ENCODE measurements at regions of chr15 and their contacts with region 1.

Region 1: GRCh38 chr15:49242820-49243219 is 72.8 kb downstream of the GALK2 start:
- DNase-seq: peak; percentile 87
- H3K4me3 ChIP-seq: peak overlapping the region; percentile 39
- H3K27ac ChIP-seq: peak overlapping the region; percentile 78
- H3K4me1 ChIP-seq: peaks cover 51% of the 10 kb centered on the region
- H3K27me3 ChIP-seq: no peaks in the 10 kb centered on the region

Region 2: DNA sequence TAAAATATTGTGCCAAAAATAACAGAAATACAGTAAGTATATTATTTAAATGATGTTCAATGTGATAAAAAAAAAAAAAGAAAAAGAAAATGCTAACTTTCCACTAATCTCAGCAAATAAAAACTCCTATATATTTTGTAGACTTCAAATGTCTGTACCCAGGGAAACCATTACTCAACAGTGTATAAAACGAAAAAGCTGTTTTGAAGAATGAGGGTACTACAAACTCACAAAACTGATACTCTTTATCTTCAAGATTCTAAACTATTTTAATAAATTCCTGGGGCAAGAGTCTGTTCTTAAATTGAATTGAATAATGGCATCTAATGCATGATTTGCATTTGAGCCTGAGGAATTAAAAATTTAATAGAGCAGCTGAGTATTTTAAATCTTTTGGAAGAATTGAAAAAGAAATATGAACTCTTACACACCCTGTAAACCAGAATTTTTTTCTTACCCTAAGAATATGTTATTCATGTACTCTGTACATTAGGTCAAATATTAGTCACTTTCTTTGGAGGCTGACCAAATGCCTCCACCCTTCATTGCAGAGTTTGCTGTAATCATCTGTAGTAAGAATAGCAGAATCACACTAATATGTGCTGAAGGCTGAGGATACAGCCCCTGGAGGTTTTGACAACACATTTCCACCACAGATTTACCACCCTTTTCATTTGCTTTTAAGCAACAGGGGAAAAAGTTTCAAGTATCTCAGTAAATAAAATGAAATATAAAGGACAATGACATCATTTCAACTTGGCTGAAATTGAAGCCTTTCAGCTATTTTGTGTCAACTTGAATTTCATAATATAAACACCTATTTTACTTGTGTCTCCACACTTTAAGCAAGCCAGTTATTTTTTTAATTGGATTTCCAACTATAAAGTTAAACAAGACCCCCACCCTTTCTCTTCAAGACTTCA is 677.0 kb before region 1 on chr15:
- in situ Hi-C with region 1: no loop called
- DNase-seq: peak; percentile 92
- H3K4me3 ChIP-seq: peak overlapping the region; percentile 50
- H3K27ac ChIP-seq: peak overlapping the region; percentile 93
- H3K4me1 ChIP-seq: peaks cover 84% of the 10 kb centered on the region
- H3K27me3 ChIP-seq: no peaks in the 10 kb centered on the region

Region 3: GRCh38 chr15:48592221-48592731 is 650.5 kb before region 1 on chr15:
- in situ Hi-C with region 1: no loop called
- DNase-seq: peak; percentile 96
- H3K4me3 ChIP-seq: no peak overlapping the region
- H3K27ac ChIP-seq: peak overlapping the region; percentile 82
- H3K4me1 ChIP-seq: peaks cover 46% of the 10 kb centered on the region
- H3K27me3 ChIP-seq: no peaks in the 10 kb centered on the region

Region 4: GRCh38 chr15:49290191-49290590 is 47.4 kb after region 1 on chr15:
- in situ Hi-C with region 1: no loop called
- DNase-seq: no peak
- H3K4me3 ChIP-seq: no peak overlapping the region
- H3K27ac ChIP-seq: no peak overlapping the region
- H3K4me1 ChIP-seq: peaks cover 9% of the 10 kb centered on the region; the same call in 1 of the 2 replicates
- H3K27me3 ChIP-seq: no peaks in the 10 kb centered on the region

Region 5: DNA sequence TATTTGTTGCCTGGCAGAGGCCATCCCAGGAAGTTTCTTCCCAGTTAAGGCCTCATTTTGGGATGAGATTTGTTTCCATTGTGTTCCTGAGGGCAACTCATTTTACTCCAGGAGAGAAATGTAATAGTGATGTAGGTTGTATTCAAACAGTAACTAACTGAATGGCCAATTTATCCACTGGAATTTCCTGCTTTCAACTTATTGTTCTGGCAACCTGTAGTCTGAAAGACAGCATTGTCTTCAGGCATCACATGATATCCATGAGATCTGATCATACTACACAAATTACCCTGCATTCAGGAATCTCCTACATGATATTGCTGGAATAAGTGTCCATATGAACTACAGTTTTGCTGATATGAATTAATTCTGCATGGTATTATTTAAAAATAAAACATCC is 100.7 kb after region 1 on chr15:
- in situ Hi-C with region 1: no loop called
- DNase-seq: no peak
- H3K4me3 ChIP-seq: no peak overlapping the region
- H3K27ac ChIP-seq: no peak overlapping the region
- H3K4me1 ChIP-seq: no peaks in the 10 kb centered on the region
- H3K27me3 ChIP-seq: no peaks in the 10 kb centered on the region

Region 6: GRCh38 chr15:49421991-49422390 is 179.2 kb after region 1 on chr15:
- in situ Hi-C with region 1: loop called (anchors 10 kb)
- DNase-seq: peak; percentile 69
- H3K4me3 ChIP-seq: peak overlapping the region; percentile 99
- H3K27ac ChIP-seq: peak overlapping the region; percentile 80
- H3K4me1 ChIP-seq: peaks cover 15% of the 10 kb centered on the region; the same call in 1 of the 2 replicates
- H3K27me3 ChIP-seq: no peaks in the 10 kb centered on the region

Measured in GM23248 (cell line).